ENCODE measurements at regions of chr14 and their contacts with region 1.

Region 1: GRCh38 chr14:67426983-67427606 is 15.1 kb upstream of the PLEK2 start:
- DNase-seq: peak; percentile 84 to 87
- ATAC-seq: peak; percentile 72
- H3K4me3 ChIP-seq: no peak overlapping the region
- H3K27ac ChIP-seq: no peak overlapping the region
- H3K4me1 ChIP-seq: no peaks in the 10 kb centered on the region
- H3K27me3 ChIP-seq: no peaks in the 10 kb centered on the region

Region 2: GRCh38 chr14:67571272-67571850 is 144.3 kb after region 1 on chr14:
- intact Hi-C with region 1: loop called (anchors 2 kb)
- DNase-seq: peak; percentile 76 to 85
- ATAC-seq: peak; percentile 42
- H3K4me3 ChIP-seq: no peak overlapping the region
- H3K27ac ChIP-seq: no peak overlapping the region
- H3K4me1 ChIP-seq: no peaks in the 10 kb centered on the region
- H3K27me3 ChIP-seq: no peaks in the 10 kb centered on the region

Measured in aorta (tissue), 5 donors.